Activated CD8-positive, alpha-beta T cell treated with anti-CD3 and anti-CD28 coated beads, Interleukin-2, amount 10 ng/mL, durations not matched to agents 7 days and 5 days (primary cell): ENCODE measurements at regions of chrX and their contacts with region 1.

Region 1: DNA sequence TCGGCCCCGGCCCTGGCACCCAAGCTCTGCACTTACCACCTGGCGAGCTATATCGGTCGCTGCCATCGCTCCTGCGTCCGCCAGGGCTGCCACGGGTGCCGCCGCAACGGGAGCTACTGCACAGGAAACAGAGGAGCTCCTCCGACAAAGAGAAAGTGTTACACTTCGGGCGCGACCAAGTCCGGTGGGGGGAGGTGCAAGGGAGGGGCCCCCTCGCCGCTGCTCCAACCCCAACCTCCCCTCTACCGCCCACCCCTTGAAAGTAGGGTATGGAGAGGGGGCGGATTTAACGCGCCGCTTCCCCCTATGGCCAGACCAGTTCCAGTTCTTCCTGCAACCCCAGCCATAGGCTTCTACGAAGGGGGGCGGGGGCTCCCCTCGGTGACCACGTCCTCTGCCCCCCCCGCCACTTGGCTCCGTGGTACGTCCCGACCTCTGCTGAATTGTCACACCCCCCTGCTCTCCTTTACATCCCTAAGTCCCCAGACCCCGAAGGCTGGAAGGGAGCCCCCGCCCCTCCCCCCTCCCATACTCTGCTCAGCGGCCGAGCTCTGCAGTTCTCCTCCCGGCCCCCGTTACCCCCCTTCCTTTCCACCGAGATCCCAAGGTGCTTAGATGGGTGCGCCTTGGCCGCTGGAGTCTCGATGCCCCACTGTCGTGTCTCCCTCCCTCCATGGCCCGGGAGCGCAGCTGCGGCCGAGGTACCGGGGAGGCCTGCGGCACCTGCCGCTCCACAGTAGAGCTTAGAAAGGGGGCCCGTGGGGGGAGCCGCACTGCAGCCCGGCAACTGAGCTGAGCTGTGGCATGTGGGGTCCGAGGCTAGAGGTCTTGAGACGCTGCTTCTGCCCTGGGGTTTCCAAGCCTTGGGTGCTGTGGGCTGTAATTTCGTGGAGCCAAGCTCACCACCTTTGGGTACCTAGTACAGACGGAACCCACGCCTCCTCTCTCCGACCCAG is at the start of gene SEPTIN6:
- DNase-seq: peak; percentile 91
- ATAC-seq: peak; percentile 80
- H3K4me3 Mint-ChIP-seq: peak within 1 kb of the TSS; percentile 92
- H3K27ac Mint-ChIP-seq: peak within 1 kb of the TSS; percentile 99
- H3K4me1 Mint-ChIP-seq: peaks cover 16% of the 10 kb centered on the region
- H3K27me3 Mint-ChIP-seq: no peaks in the 10 kb centered on the region
- total RNA-seq, gene SEPTIN6: 303 to 312 TPM

Region 2: GRCh38 chrX:119647552-119648420 is 45.5 kb before region 1 on chrX:
- CTCF ChIA-PET with region 1: no interaction called
- POLR2A ChIA-PET with region 1: interaction called, 18 read pairs
- DNase-seq: peak; percentile 50
- ATAC-seq: peak; percentile 91
- H3K4me3 Mint-ChIP-seq: no peak overlapping the region
- H3K27ac Mint-ChIP-seq: peak overlapping the region; percentile 84
- H3K4me1 Mint-ChIP-seq: peaks cover 44% of the 10 kb centered on the region
- H3K27me3 Mint-ChIP-seq: no peaks in the 10 kb centered on the region

Region 3: DNA sequence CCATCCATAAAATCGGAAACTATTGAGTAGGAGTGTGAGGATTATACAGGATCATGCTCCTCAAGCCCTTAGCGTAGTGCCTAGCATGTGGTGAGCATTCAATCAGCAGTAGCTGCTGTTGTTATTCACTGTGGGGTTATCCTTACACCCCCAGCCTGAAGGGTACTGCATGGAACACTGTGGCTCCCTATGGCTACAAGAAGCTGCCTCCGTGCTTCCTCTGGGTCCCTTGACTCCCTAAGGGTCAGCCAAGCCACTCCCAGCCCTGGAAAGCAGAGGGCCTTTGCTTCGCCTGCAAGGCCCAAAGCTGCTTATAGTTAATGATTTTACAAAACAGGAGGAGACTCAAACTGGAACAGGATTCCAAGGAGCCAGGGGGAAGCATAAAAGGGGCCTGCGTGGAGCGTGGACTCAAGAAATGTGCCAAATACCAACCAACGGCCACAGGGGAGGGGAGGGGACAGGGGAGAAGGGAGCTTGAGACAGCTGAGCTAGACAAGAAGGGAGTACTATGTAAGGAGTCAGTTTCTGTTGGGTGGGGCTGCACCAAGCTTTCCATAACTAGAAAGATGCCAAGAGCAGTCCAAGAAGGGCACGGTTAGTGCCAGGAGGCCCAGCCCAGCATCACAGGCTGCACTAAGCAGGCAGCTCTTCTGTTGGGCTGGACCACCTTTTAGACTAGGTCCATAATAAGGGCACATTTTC is 16.2 kb before region 1 on chrX:
- CTCF ChIA-PET with region 1: interaction called, 29 read pairs
- POLR2A ChIA-PET with region 1: interaction called, 198 read pairs
- DNase-seq: no peak
- ATAC-seq: no peak
- H3K4me3 Mint-ChIP-seq: peak overlapping the region; percentile 78
- H3K27ac Mint-ChIP-seq: peak overlapping the region; percentile 92
- H3K4me1 Mint-ChIP-seq: peaks cover 55% of the 10 kb centered on the region
- H3K27me3 Mint-ChIP-seq: no peaks in the 10 kb centered on the region